Esophagus squamous epithelium (tissue), 5 donors: ENCODE measurements at regions of chr16 and their contacts with region 1.

Region 1: DNA sequence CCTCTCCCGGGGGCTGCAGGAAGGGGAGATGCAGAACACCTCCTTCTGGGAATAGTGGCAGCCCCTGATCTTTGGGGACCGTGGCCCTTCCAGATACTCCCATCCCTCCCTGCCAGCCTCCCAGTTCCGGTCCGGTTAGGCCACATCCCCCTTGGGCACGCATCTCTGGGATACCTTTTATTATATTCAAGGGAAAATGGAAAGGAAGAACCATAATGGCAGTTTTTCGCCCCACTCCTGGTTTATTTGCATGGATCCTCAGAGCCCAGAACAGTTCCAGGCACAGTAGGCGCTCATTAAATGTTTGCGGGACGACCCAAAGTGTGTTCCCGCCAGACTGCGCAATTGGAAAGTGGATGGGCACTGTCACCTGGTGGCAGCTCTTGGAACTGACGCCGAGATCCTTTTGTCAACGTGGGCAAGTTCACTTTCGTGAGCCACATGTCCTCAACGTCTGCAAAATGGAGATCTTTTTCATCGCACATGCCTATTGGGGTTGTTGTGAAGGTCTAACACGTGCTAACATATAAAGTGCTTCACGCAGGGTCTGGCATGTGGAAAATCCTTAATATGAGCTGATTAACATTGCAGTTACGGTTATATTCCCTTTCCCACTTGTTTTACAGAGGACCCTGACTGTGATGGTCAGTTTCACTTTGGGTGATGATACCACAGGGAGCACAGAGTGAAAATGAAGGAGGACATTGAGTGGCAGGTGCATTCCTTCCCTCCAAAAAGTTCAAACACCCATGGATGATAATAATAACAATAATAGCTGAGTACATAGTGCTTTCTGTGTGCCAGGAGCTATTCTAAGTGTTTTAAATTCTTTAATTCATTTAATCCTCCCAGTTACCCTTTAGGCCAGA is 1.7 kb upstream of the GPRC5B start:
- DNase-seq: no peak
- H3K4me3 ChIP-seq: peak overlapping the region in 3 of 4 donors; percentile 64 to 83 (median 74)
- H3K27ac ChIP-seq: peak overlapping the region in 1 of 4 donors; percentile 57
- H3K4me1 ChIP-seq: peaks cover 22 to 50% (median 26%) of the 10 kb centered on the region in 3 donors
- H3K27me3 ChIP-seq: peaks cover 0 to 36% (median 0%) of the 10 kb centered on the region in 4 donors
- CTCF ChIP-seq: peak; percentile 92 to 100 (median 99)
- POLR2A ChIP-seq: no peak

Region 2: DNA sequence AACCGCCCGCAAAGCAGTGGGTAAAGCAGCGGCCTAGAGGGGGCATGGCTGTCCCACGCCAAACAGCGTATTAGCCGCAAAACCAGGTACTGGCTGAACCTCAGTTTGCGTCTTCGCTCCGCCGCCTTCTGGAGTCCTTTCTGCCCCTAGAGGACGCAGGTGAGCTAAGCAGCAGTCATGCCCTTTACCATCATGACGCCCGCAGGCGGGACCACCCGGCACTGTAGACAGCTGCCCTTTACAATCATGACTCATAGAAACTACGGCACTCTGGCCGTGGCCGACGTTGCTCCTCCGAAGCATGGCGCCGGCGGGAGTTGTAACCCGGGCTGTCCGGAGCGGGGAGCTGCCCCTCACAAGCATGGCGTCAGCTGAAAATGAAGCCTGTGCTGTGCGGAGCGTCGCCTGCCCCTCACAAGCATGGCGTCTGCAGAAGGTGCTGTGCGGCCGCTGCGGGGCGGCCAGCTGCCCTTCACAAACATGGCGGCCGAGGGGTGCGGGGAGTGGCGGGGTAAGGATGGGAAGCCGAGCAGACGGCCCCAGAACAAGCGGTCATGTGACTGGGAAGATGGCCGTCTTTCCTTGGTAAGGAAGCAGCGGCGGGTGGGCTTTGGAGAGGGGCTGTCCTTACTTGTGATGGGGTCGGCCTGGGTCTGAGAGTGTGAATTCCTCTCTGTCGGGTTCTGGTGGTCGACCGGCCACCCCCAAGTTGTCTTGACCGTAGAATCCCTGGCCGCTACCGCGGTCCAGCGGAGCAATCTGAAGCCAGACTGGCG is 331.0 kb before region 1 on chr16 and contains the start of gene VPS35L:
- intact Hi-C with region 1: loop called (anchors 5 kb)
- DNase-seq: peak; percentile 98
- H3K4me3 ChIP-seq: peak within 1 kb of the TSS; percentile 58 to 94 (median 82)
- H3K27ac ChIP-seq: peak within 1 kb of the TSS; percentile 78 to 95 (median 90)
- H3K4me1 ChIP-seq: peaks cover 8 to 27% (median 9%) of the 10 kb centered on the region in 3 donors
- H3K27me3 ChIP-seq: no peaks in the 10 kb centered on the region
- CTCF ChIP-seq: peak; percentile 67 to 85 (median 74)
- POLR2A ChIP-seq: peak in 1 of 4 donors; percentile 29
- total RNA-seq, gene VPS35L: 20.8 to 32.9 (median 23.9) TPM

Region 3: GRCh38 chr16:19589771-19590302 is 296.5 kb before region 1 on chr16:
- intact Hi-C with region 1: no loop called
- DNase-seq: no peak
- H3K4me3 ChIP-seq: no peak overlapping the region
- H3K27ac ChIP-seq: peak overlapping the region; percentile 22 to 83 (median 60)
- H3K4me1 ChIP-seq: peaks cover 1 to 26% (median 1%) of the 10 kb centered on the region in 3 donors
- H3K27me3 ChIP-seq: no peaks in the 10 kb centered on the region
- CTCF ChIP-seq: no peak
- POLR2A ChIP-seq: no peak

Region 4: GRCh38 chr16:19601083-19601976 is 285.0 kb before region 1 on chr16:
- intact Hi-C with region 1: loop called (anchors 5 kb)
- DNase-seq: no peak
- H3K4me3 ChIP-seq: no peak overlapping the region
- H3K27ac ChIP-seq: peak overlapping the region; percentile 9 to 62 (median 44)
- H3K4me1 ChIP-seq: peaks cover 5 to 23% (median 9%) of the 10 kb centered on the region in 3 donors
- H3K27me3 ChIP-seq: no peaks in the 10 kb centered on the region
- CTCF ChIP-seq: peak; percentile 21 to 75 (median 65)
- POLR2A ChIP-seq: no peak

Region 5: GRCh38 chr16:19771796-19772195 is 114.5 kb before region 1 on chr16:
- intact Hi-C with region 1: no loop called
- DNase-seq: no peak
- H3K4me3 ChIP-seq: no peak overlapping the region
- H3K27ac ChIP-seq: no peak overlapping the region
- H3K4me1 ChIP-seq: no peaks in the 10 kb centered on the region
- H3K27me3 ChIP-seq: no peaks in the 10 kb centered on the region
- CTCF ChIP-seq: no peak
- POLR2A ChIP-seq: no peak